ENCODE measurements at regions of chr9 and their contacts with region 1.

Region 1: GRCh38 chr9:91036826-91037510 is 235.3 kb downstream of the SYK start:
- DNase-seq: peak; percentile 79
- H3K4me3 Mint-ChIP-seq: peak overlapping the region; percentile 40
- H3K27ac Mint-ChIP-seq: peak overlapping the region; percentile 90
- H3K4me1 Mint-ChIP-seq: peaks cover 32% of the 10 kb centered on the region
- H3K27me3 Mint-ChIP-seq: no peaks in the 10 kb centered on the region
- CTCF ChIP-seq: peak; percentile 47

Region 2: DNA sequence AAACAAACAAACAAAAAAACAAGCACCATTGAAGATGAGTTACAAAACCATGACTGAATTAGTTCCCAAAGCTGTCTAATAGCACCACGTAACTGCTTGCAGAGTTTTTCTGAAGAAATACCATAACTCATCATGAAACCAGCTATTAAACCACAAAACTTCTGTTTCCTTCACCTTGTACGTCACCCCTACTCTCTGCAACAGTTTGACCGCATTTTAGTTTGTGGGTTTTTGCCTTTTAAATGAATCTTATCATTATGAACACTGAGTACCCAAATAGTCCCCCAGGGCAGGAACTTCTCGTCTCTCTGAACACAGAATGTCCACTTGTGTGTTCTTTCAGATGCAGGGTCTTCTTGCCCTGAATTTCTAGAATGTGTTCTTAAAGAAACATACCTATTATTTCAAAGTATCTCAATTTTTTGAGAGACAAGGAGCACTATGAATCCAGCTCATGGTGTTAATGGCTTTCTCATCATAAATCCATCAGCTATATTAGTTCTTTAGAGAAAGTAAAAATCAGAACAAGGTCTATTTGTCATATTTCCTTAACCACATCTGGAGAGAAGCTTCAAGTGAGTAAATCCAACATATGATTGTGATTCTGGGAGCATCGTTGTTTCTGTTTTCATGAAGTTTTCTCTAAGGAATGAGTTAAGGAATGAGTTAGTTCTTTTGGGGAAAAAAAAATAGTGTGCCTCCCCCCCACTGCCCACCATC is 114.2 kb after region 1 on chr9:
- CTCF ChIA-PET with region 1: no interaction called
- intact Hi-C with region 1: no loop called
- DNase-seq: no peak
- H3K4me3 Mint-ChIP-seq: no peak overlapping the region
- H3K27ac Mint-ChIP-seq: no peak overlapping the region
- H3K4me1 Mint-ChIP-seq: no peaks in the 10 kb centered on the region
- H3K27me3 Mint-ChIP-seq: no peaks in the 10 kb centered on the region
- CTCF ChIP-seq: no peak

Region 3: DNA sequence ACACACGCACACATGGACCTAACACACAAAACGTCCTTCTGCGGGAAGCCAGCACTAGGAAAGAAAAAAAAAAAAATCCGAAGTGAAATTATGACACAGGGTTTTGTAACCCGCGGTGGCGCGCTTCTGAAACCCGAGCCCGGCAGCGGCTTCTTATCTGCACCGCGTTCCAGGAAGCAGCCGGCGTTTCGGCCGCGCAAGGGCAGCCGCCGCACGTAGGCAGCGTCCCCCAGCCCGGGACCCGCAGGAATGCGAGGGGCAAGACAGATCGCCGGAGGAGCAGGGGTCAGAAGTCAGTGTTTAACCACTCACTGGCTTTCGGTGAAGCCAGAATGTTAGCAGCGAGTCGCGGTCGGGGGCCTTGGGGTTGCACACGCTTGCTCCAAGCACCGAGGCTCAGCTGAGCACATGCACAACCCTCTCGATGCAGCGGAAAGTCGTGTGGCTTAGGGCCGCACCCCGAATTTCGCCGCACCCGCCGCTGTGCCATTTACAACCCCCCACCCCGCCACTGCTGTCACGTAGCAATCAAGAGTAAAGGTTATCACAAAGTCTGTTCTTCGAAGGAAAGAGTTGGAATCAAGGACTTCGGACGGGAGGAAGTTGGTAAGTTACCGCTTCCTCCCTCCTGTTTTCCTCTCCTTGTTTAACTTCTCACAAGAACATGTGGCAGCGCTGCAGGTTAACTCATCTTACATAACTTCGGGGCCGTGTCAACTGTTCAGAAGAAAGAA is 156.9 kb after region 1 on chr9:
- CTCF ChIA-PET with region 1: no interaction called
- intact Hi-C with region 1: loop called (anchors 10 kb)
- DNase-seq: peak; percentile 80
- H3K4me3 Mint-ChIP-seq: peak overlapping the region; percentile 66
- H3K27ac Mint-ChIP-seq: peak overlapping the region; percentile 89
- H3K4me1 Mint-ChIP-seq: peaks cover 30% of the 10 kb centered on the region
- H3K27me3 Mint-ChIP-seq: no peaks in the 10 kb centered on the region
- CTCF ChIP-seq: no peak

Region 4: DNA sequence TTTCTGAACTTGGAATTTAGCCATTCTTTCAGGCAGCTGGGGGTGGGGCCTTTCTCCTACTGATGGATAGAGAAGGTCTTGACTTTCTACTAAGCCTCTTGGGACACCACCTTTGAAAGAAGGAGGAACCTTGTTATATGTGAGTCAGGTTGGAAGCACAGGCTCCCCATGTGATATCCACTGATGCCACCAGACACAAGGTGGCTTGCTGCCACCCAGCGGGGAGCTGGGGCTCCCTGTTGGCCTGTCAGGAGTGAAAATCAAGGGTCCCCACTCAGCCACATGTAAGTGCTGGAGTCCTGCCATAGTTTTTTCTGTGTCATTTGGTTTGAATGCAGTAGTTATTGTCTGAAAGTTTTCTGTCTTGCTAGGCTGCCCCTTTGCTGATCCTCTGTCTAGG is 639.1 kb after region 1 on chr9:
- CTCF ChIA-PET with region 1: no interaction called
- intact Hi-C with region 1: loop called (anchors 10 kb)
- DNase-seq: peak; percentile 56
- H3K4me3 Mint-ChIP-seq: no peak overlapping the region
- H3K27ac Mint-ChIP-seq: no peak overlapping the region
- H3K4me1 Mint-ChIP-seq: no peaks in the 10 kb centered on the region
- H3K27me3 Mint-ChIP-seq: peaks cover 28% of the 10 kb centered on the region
- CTCF ChIP-seq: peak; percentile 31

Measured in Calu3 (cell line).